Activated naive CD4-positive, alpha-beta T cell treated with anti-CD3 and anti-CD28 coated beads, Interleukin-2, amount 10 ng/mL, durations not matched to agents 7 days and 5 days (primary cell): ENCODE measurements at regions of chr16 and their contacts with region 1.

Region 1: DNA sequence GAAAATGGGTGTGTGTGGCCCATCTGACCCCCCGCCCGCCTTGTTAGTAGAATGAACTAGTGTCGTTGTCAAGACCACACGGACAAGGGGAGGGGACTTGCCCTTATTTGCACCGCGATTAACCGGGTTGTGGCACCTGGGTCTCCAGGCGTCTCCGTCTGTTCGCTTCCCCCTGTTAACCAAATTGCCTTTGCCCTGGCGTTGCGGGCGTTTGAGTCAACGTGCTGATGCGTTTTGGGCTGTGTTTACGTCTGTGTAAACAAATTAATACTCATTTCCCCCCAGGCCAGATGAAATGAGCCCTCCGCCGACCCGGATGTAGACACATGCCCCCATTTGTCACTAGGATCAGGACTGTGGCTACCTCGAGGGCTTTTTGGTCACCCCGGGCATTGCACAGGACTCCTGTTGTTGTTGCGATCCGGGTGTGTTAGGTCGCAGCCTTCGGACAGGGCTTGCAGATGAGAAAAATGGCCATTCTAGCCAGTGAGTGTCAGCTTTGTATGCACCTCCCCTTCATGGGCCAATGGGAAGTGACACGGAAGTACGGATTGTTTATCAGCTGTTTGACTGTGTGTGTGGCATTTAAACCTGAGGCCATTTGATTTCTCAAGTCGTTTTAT is 906 bp downstream of the RBL2 start:
- DNase-seq: peak; percentile 77
- H3K4me3 Mint-ChIP-seq: peak overlapping the region; percentile 86
- H3K27ac Mint-ChIP-seq: peak overlapping the region; percentile 99
- H3K4me1 Mint-ChIP-seq: peaks cover 46% of the 10 kb centered on the region
- H3K27me3 Mint-ChIP-seq: no peaks in the 10 kb centered on the region

Region 2: GRCh38 chr16:53457670-53458069 is 22.5 kb after region 1 on chr16:
- CTCF ChIA-PET with region 1: interaction called, 10 read pairs
- DNase-seq: peak; percentile 88
- H3K4me3 Mint-ChIP-seq: peak overlapping the region; percentile 79
- H3K27ac Mint-ChIP-seq: peak overlapping the region; percentile 98
- H3K4me1 Mint-ChIP-seq: peaks cover 95% of the 10 kb centered on the region
- H3K27me3 Mint-ChIP-seq: no peaks in the 10 kb centered on the region